ENCODE measurements at regions of chr3 and their contacts with region 1.

Region 1: GRCh38 chr3:52245322-52246263 is at the start of gene PPM1M:
- DNase-seq: no peak
- H3K4me3 ChIP-seq: peak within 1 kb of the TSS; percentile 67
- H3K27ac ChIP-seq: peak within 1 kb of the TSS; percentile 47
- H3K27me3 ChIP-seq: no peaks in the 10 kb centered on the region
- CTCF ChIP-seq: no peak
- polyA plus RNA-seq, gene PPM1M: 29.2 and 34.4 TPM in 2 replicates

Region 2: GRCh38 chr3:52259035-52259434 is 13.4 kb after region 1 on chr3:
- CTCF ChIA-PET with region 1: interaction called, 3 read pairs
- POLR2A ChIA-PET with region 1: interaction called, 14 read pairs
- DNase-seq: no peak
- H3K4me3 ChIP-seq: no peak overlapping the region
- H3K27ac ChIP-seq: no peak overlapping the region
- H3K27me3 ChIP-seq: no peaks in the 10 kb centered on the region
- CTCF ChIP-seq: no peak

Region 3: GRCh38 chr3:52481819-52482521 is 236.4 kb after region 1 on chr3:
- CTCF ChIA-PET with region 1: no interaction called
- POLR2A ChIA-PET with region 1: no interaction called
- DNase-seq: no peak
- H3K4me3 ChIP-seq: no peak overlapping the region
- H3K27ac ChIP-seq: no peak overlapping the region
- H3K27me3 ChIP-seq: no peaks in the 10 kb centered on the region
- CTCF ChIP-seq: peak; percentile 45

Measured in AG04450 (cell line).